ENCODE measurements at regions of chr15 and their contacts with region 1.

Region 1: GRCh38 chr15:64893481-64894394 is 18.0 kb upstream of the ANKDD1A start:
- DNase-seq: peak; percentile 98
- H3K4me3 Mint-ChIP-seq: peak overlapping the region; percentile 82
- H3K27ac Mint-ChIP-seq: peak overlapping the region; percentile 99
- H3K4me1 Mint-ChIP-seq: peaks cover 72% of the 10 kb centered on the region
- H3K27me3 Mint-ChIP-seq: no peaks in the 10 kb centered on the region

Region 2: GRCh38 chr15:64558460-64559179 is 335.1 kb before region 1 on chr15:
- CTCF ChIA-PET with region 1: no interaction called
- POLR2A ChIA-PET with region 1: no interaction called
- DNase-seq: no peak
- H3K4me3 Mint-ChIP-seq: no peak overlapping the region
- H3K27ac Mint-ChIP-seq: no peak overlapping the region
- H3K4me1 Mint-ChIP-seq: peaks cover 12% of the 10 kb centered on the region
- H3K27me3 Mint-ChIP-seq: no peaks in the 10 kb centered on the region

Region 3: GRCh38 chr15:64809649-64810496 is 83.9 kb before region 1 on chr15:
- CTCF ChIA-PET with region 1: interaction called, 12 read pairs
- POLR2A ChIA-PET with region 1: interaction called, 3 read pairs
- DNase-seq: peak; percentile 76
- H3K4me3 Mint-ChIP-seq: no peak overlapping the region
- H3K27ac Mint-ChIP-seq: no peak overlapping the region
- H3K4me1 Mint-ChIP-seq: peaks cover 2% of the 10 kb centered on the region
- H3K27me3 Mint-ChIP-seq: peaks cover 8% of the 10 kb centered on the region

Region 4: DNA sequence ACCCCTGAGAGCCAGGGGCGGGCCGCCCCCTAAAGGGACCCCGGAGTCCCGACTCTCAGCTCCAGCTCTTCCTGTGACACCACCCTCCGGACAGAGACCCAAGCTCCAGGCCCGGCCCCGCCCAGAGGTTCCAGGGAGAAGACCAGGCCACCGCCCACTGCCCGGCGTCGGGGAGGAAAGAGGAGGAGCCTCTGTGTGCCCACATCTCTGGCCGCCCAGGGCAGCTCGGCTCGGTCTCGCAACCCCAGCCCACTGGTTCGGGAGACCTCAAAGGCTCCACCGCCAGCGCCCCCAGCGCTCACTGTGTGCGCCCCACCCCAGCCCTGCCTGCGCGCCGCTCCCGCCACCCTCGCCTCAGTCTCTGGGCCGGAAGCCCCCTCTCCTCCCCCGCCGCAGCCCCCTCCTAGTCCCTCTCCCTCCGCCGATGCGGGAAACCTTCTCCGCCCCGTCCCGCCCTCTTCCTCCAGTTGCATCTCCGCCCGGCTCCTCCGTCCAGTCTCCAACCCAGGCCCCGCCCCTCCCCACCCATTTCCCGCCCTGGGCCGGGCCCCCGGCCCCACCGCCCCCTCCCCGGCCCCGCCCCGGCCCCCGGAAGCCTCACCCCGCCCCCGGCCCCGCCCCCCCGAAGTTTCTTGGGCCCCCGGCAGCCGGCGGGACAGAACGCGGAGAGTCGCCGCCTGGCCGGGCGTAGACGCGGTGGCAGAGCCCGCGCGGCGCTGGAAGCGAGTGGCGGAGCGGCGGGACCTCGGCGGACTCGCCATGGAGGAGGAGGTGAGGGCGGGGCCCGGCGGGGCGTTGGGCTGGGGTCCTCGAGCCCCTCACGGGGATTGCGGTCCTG is 52.3 kb before region 1 on chr15 and contains the start of gene PLEKHO2:
- CTCF ChIA-PET with region 1: interaction called, 105 read pairs
- POLR2A ChIA-PET with region 1: interaction called, 148 read pairs
- DNase-seq: peak; percentile 95
- H3K4me3 Mint-ChIP-seq: peak within 1 kb of the TSS; percentile 98
- H3K27ac Mint-ChIP-seq: peak within 1 kb of the TSS; percentile 84
- H3K4me1 Mint-ChIP-seq: peaks cover 71% of the 10 kb centered on the region
- H3K27me3 Mint-ChIP-seq: no peaks in the 10 kb centered on the region
- total RNA-seq, gene PLEKHO2: 32.9 to 33.1 TPM

Region 5: GRCh38 chr15:64856429-64857145 is 37.2 kb before region 1 on chr15:
- CTCF ChIA-PET with region 1: interaction called, 4 read pairs
- POLR2A ChIA-PET with region 1: interaction called, 16 read pairs
- DNase-seq: no peak
- H3K4me3 Mint-ChIP-seq: no peak overlapping the region
- H3K27ac Mint-ChIP-seq: peak overlapping the region; percentile 59
- H3K4me1 Mint-ChIP-seq: peaks cover 41% of the 10 kb centered on the region
- H3K27me3 Mint-ChIP-seq: no peaks in the 10 kb centered on the region

Region 6: DNA sequence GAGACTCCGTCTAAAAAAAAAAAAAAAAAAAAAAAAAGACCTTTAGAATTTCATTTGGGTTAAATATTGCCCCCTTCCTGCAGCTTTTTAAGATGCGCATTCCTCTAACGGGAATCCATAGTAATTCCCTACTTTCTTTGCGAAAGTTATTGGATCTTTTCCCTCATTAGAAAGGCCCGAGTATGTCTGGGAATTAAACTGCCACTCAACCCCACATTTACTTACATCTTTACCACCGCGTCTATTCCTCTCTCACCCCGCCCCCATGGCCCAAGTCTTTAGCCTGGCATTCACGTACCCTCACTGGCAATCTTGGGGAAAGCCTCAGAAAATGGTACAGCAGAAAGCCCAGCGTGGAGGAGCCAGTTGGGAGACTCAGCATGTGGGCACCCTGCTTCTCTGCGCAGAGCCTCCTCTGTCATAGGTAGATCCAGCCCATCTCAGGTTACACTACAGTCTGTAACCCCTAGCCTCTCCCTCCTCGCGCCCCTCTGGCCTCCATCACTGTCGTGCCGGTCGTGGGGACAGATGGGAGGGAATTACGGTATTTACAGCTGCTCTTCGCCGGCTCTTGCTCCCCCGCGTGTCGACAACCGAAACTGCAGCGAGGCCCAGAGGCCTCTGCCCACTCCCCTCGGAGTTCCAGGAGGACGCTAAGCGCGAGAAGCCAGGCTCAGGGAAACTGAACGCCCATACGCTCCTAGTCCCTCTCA is 11.5 kb after region 1 on chr15:
- CTCF ChIA-PET with region 1: interaction called, 39 read pairs
- POLR2A ChIA-PET with region 1: interaction called, 78 read pairs
- DNase-seq: peak; percentile 81
- H3K4me3 Mint-ChIP-seq: peak overlapping the region; percentile 29
- H3K27ac Mint-ChIP-seq: peak overlapping the region; percentile 64
- H3K4me1 Mint-ChIP-seq: peaks cover 43% of the 10 kb centered on the region
- H3K27me3 Mint-ChIP-seq: peaks cover 1% of the 10 kb centered on the region

Region 7: DNA sequence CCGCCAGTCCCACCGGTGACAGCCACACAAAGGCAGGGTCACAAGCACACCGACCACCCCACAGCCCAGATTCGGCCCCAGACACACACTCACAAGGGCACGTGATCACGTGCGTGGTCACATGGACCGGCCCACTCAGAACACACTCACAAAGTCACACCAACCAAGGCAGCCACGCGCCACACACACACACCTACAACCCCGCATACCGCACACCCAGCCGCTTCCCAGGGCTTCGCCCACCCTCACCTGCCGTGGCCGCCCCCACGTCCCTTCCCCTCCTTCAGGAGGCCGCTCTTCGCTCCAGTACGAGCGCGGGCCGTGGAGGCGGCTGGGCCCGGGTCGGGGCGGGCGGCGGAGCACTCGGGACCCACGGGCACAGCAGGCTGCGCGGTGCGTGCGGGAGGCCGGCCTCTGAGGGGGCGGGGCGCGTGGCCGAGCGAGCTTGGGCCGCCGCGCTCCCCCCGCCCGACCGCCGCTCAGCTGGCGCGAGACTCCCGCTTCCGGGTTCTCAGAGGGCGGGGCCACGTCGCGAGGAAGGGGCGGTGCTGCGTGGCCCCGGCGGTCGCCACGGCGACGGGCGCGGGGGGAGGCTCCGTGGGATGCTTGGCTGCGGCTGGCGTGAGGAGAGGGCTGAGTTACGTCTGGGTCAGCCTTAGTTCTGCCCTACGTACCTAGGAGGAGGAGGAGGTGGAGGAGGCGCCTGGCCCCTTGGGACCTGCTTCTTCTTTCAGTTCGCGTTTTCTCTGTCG is 95.9 kb after region 1 on chr15 and contains the start of gene SPG21:
- CTCF ChIA-PET with region 1: no interaction called
- POLR2A ChIA-PET with region 1: interaction called, 28 read pairs
- DNase-seq: peak; percentile 94
- H3K4me3 Mint-ChIP-seq: peak within 1 kb of the TSS; percentile 99
- H3K27ac Mint-ChIP-seq: peak within 1 kb of the TSS; percentile 88
- H3K4me1 Mint-ChIP-seq: peaks cover 56% of the 10 kb centered on the region
- H3K27me3 Mint-ChIP-seq: no peaks in the 10 kb centered on the region
- total RNA-seq, gene SPG21: 55.6 to 57.2 TPM

Measured in activated CD4-positive, alpha-beta memory T cell treated with anti-CD3 and anti-CD28 coated beads, Interleukin-2, amount 10 ng/mL, durations not matched to agents 7 days and 5 days (primary cell).